Dendritic cell treated with granulocyte-macrophage colony-stimulating factor and Interleukin-4, amounts not matched to agents 40 ng/mL and 50 ng/mL, for 4 days (primary cell): ENCODE measurements at regions of chr1 and their contacts with region 1.

Region 1: DNA sequence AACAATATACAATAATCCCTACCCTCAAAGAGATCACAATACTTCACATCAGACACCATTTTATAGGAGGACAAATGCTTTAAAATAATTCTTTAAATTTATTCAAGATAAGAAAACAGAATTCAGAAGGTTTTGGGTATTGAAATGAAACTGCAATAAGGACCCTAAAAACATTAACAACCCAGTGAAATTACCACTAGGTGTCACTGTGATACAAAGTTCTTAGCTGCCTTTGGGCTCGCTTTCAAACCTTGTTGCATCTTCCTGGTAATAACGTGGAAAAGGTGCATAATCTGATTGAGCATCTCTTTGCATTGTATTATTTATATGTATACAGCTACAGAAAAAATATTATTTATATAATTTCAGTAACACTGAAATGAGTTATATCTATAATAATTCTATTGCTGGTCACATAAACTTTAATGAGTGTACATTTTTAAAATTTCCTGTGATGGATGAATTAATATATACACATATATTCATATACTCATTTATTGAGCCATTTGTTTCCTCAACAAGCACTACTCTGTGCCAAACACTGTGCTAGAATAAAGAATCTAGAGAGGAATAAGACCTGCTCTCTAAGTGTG is 185.2 kb downstream of the FAF1 start:
- H3K4me3 Mint-ChIP-seq: no peak overlapping the region
- H3K27ac Mint-ChIP-seq: no peak overlapping the region
- H3K4me1 Mint-ChIP-seq: peaks cover 4% of the 10 kb centered on the region
- H3K27me3 Mint-ChIP-seq: no peaks in the 10 kb centered on the region

Region 2: GRCh38 chr1:50591598-50591997 is 183.3 kb before region 1 on chr1:
- intact Hi-C with region 1: no loop called
- H3K4me3 Mint-ChIP-seq: no peak overlapping the region
- H3K27ac Mint-ChIP-seq: no peak overlapping the region
- H3K4me1 Mint-ChIP-seq: no peaks in the 10 kb centered on the region
- H3K27me3 Mint-ChIP-seq: no peaks in the 10 kb centered on the region

Region 3: GRCh38 chr1:51044834-51045233 is 270.0 kb after region 1 on chr1:
- intact Hi-C with region 1: loop called (anchors 5 kb)
- H3K4me3 Mint-ChIP-seq: no peak overlapping the region
- H3K27ac Mint-ChIP-seq: no peak overlapping the region
- H3K4me1 Mint-ChIP-seq: no peaks in the 10 kb centered on the region
- H3K27me3 Mint-ChIP-seq: peaks cover 9% of the 10 kb centered on the region